Transverse colon (tissue), 4 donors: ENCODE measurements at regions of chr5 and their contacts with region 1.

Region 1: DNA sequence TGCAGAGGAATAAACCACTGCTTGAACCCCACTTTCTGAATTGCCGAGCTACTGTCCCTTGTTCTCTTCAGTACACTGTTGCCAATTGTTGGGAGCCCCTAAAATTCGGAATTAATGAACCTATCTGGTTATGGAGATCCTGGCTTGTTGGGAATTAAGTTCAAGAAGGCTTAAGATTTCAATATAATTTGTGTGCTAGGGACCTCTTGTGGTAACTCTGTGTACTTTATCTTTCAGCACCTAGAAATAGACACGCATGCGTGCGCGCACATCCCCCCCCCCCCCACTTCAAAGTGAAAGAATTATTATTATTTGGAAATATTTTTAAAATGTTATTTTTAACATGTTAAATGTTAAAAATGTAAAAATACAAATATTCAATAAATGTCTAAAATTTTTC is 53.3 kb upstream of the FAM169A start:
- DNase-seq: no peak
- H3K4me3 ChIP-seq: no peak overlapping the region
- H3K27ac ChIP-seq: no peak overlapping the region
- H3K4me1 ChIP-seq: peaks cover 0 to 4% (median 0%) of the 10 kb centered on the region in 4 donors
- H3K27me3 ChIP-seq: no peaks in the 10 kb centered on the region
- CTCF ChIP-seq: peak; percentile 27 to 73 (median 58)
- EP300 ChIP-seq: no peak
- POLR2A ChIP-seq: no peak

Region 2: GRCh38 chr5:74673011-74673790 is 246.3 kb before region 1 on chr5:
- in situ Hi-C with region 1: loop called (anchors 10 to 25 kb)
- intact Hi-C with region 1: no loop called
- DNase-seq: no peak
- H3K4me3 ChIP-seq: no peak overlapping the region
- H3K27ac ChIP-seq: peak overlapping the region in 1 of 4 donors; percentile 33
- H3K4me1 ChIP-seq: no peaks in the 10 kb centered on the region
- H3K27me3 ChIP-seq: no peaks in the 10 kb centered on the region
- CTCF ChIP-seq: peak in 4 of 5 experiments; percentile 22 to 44 (median 28)
- EP300 ChIP-seq: no peak
- POLR2A ChIP-seq: no peak

Region 3: GRCh38 chr5:74798977-74799911 is 120.2 kb before region 1 on chr5:
- in situ Hi-C with region 1: loop called in 1 of 4 experiments (anchors 25 kb)
- intact Hi-C with region 1: no loop called
- DNase-seq: no peak
- H3K4me3 ChIP-seq: no peak overlapping the region
- H3K27ac ChIP-seq: no peak overlapping the region
- H3K4me1 ChIP-seq: peaks cover 0 to 4% (median 0%) of the 10 kb centered on the region in 4 donors
- H3K27me3 ChIP-seq: no peaks in the 10 kb centered on the region
- CTCF ChIP-seq: no peak
- EP300 ChIP-seq: no peak
- POLR2A ChIP-seq: no peak